ENCODE measurements at regions of chr9 and their contacts with region 1.

Region 1: DNA sequence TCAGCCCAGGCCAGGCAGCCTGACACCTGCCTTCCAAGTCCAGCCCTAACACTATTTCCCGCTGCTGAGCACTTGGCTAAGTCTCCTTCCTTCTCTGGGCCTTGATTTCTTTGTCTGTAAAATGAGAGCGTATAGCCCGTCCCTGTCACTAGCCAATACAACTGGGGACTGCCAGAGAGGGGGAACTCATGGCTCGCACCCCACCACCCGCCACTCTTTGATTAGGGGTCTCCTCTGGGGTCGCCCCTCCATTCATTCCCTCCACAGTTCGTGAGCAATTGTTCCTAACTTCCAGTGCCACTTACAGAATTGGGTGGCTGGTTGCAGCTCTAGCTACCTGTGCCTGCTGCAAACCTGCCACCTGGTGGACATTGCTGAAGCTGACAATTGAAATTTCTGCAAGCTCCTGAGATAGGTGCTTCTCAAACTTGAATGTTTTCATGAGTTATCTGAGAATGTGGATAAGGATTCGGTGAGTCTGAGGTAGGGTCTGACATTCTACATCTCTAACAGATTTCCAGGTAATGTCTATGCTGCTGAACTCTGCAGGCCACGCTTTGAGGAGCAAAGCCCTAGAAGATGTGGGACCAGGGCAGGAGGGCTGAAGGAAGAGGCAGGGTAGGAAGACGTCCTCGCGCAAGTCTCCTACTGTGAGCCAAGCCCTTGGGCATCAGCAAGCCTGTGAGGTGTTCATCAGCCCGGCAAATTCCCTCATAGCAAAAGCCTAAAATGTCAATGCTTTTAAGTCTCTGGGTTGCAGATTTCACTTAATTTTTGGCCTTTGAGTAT is 13.3 kb upstream of the RECK start:
- DNase-seq: peak; percentile 69
- CTCF ChIP-seq: peak; percentile 84

Region 2: DNA sequence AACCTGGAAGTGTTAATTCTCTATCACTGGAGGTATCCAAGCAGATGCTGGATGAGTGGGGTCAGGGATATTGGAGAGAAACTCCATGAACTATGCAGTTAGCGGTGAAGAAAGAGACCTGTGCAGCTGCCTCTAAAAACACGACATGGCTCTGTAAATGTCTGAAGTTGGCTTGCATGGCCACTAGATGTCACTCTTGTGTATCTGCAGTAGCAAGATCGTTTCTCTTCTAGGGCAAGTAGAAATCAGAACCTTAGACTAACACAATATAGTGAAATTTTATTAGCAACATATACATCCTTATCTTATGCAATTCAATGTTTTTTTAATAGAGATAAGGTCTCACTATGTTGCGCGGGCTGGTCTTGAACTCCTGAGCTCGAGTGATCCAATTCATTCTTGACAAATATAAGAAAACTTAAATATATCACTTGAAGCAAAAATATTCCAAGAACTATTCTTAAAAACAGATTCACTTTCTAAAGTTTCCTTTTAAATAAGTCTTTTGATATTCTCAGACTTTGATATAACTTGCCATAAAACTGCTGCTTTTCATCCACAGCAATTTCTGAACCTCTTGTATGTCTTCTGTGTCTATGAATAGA is 68.4 kb before region 1 on chr9:
- in situ Hi-C with region 1: loop called (anchors 10 kb)
- DNase-seq: peak; percentile 71
- CTCF ChIP-seq: peak; percentile 79